HepG2 (cell line): ENCODE measurements at regions of chr11 and their contacts with region 1.

Region 1: GRCh38 chr11:124934862-124935547 is 842 bp downstream of the HEPACAM start:
- DNase-seq: peak; percentile 78
- ATAC-seq: peak; percentile 63
- H3K4me3 ChIP-seq: peak overlapping the region; percentile 69 to 84 (median 83)
- H3K27ac ChIP-seq: peak overlapping the region; percentile 90
- H3K4me1 ChIP-seq: peaks cover 87% of the 10 kb centered on the region
- H3K27me3 ChIP-seq: no peaks in the 10 kb centered on the region; a peak in 1 of 5 replicates
- CTCF ChIP-seq: peak; percentile 62
- EP300 ChIP-seq: peak in 1 of 2 experiments; percentile 64; a peak in 1 of 4 replicates
- POLR2A ChIP-seq: 0 out of 4 replicates have a peak, but pooled peaks of 1 of the 2 experiments have one; percentile 41
- RAD21 ChIP-seq: no peak

Region 2: GRCh38 chr11:124622531-124623451 is 312.2 kb before region 1 on chr11 and contains the start of gene TBRG1:
- CTCF ChIA-PET with region 1: no interaction called
- POLR2A ChIA-PET with region 1: interaction called, 4 read pairs
- in situ Hi-C with region 1: no loop called
- intact Hi-C with region 1: loop called (anchors 5 kb)
- DNase-seq: peak; percentile 92
- ATAC-seq: peak; percentile 99
- H3K4me3 ChIP-seq: peak within 1 kb of the TSS; percentile 88 to 98 (median 96)
- H3K27ac ChIP-seq: peak within 1 kb of the TSS; percentile 90
- H3K4me1 ChIP-seq: peaks cover 29% of the 10 kb centered on the region
- H3K27me3 ChIP-seq: peaks cover 0 to 15% of the 10 kb centered on the region in 2 experiments; a peak in 2 of 5 replicates
- CTCF ChIP-seq: 0 out of 2 replicates have a peak, but pooled peaks have one; percentile 16
- EP300 ChIP-seq: no peak
- POLR2A ChIP-seq: peak; percentile 95 to 97
- RAD21 ChIP-seq: peak; percentile 32; the same call in 1 of the 2 replicates
- total RNA-seq, gene TBRG1: 20.3 and 21.7 TPM in 2 replicates

Region 3: DNA sequence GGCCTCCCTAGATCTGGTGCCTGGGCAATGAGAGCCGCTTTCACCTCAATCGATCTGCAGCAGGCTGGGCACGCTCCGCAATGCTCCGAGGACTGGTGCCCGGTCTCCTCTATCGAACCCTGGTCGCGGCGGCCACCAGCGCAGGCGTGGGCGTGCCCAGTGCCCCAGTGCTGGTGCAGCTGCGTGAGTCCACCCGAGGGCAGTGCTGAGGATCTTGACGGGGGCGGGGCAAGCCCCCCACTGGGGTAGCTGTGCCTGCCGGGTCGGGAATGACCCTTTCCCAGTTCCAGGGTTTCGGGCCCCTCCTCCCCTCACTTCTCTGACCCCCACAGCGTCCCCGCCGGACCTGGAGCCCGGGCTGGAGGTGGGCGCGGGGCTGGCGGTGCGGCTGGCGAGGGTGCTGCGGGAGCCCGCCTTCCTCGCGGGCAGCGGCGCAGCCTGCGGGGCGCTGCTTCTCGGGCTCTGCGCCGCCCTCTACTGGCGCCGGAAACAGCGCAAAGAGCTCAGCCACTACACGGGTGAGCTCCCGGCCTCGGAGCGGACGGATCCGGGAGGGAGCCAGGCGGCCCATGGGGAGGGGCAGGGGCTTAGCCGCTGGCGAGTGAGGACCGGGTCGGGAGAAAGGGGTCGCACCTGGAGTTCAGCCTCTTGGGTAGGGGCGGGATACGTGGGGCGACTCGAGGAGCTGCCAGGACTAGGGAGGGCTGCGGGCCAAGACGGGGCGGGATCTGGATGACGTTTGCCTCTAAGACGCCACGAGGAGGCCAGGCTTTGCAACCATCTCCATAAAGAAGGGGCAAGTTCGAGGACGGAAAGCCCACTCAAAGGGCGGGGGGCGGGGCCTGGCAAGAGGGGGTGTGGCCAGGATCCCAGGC is 58.8 kb before region 1 on chr11:
- CTCF ChIA-PET with region 1: no interaction called
- POLR2A ChIA-PET with region 1: interaction called, 7 read pairs
- in situ Hi-C with region 1: no loop called
- intact Hi-C with region 1: loop called (anchors 2 kb)
- DNase-seq: peak; percentile 54
- ATAC-seq: peak; percentile 93
- H3K4me3 ChIP-seq: peak overlapping the region; percentile 51 to 78 (median 64)
- H3K27ac ChIP-seq: no peak overlapping the region
- H3K4me1 ChIP-seq: peaks cover 47% of the 10 kb centered on the region
- H3K27me3 ChIP-seq: peaks cover 2 to 63% of the 10 kb centered on the region in 2 experiments; a peak in 4 of 5 replicates
- CTCF ChIP-seq: peak; percentile 90
- EP300 ChIP-seq: no peak
- POLR2A ChIP-seq: 0 out of 4 replicates have a peak, but pooled peaks of 1 of the 2 experiments have one; percentile 28
- RAD21 ChIP-seq: peak; percentile 54; the same call in 1 of the 2 replicates

Region 4: DNA sequence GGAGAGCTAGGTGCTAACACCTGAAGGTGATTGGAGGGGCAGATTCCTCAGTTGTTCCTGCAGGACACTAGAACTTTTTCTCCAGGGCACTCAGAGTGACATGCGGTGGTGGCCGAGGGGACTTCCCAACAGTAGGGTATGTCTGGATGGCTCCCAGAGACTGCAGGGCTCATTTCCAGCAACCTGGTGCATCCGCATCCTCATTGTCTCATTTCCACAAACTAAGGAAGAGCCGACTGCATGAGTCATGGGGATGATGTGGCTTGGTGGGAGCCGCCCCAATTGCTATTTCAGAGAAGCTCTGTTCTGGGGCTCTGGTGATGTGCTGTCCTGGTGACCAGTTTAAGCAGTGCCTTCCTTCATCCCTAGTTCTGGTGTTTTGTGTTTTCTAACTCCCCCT is 34.5 kb before region 1 on chr11:
- CTCF ChIA-PET with region 1: no interaction called
- POLR2A ChIA-PET with region 1: interaction called, 9 read pairs
- in situ Hi-C with region 1: no loop called
- intact Hi-C with region 1: loop called (anchors 5 kb)
- DNase-seq: peak; percentile 25
- ATAC-seq: no peak; the same call in 2 of the 3 replicates
- H3K4me3 ChIP-seq: no peak overlapping the region
- H3K27ac ChIP-seq: no peak overlapping the region
- H3K4me1 ChIP-seq: peaks cover 54% of the 10 kb centered on the region
- H3K27me3 ChIP-seq: peaks cover 0 to 26% of the 10 kb centered on the region in 2 experiments; a peak in 1 of 5 replicates
- CTCF ChIP-seq: no peak
- EP300 ChIP-seq: no peak
- POLR2A ChIP-seq: no peak
- RAD21 ChIP-seq: no peak

Region 5: GRCh38 chr11:125649465-125650166 is 714.6 kb after region 1 on chr11:
- CTCF ChIA-PET with region 1: no interaction called
- POLR2A ChIA-PET with region 1: no interaction called
- in situ Hi-C with region 1: no loop called
- intact Hi-C with region 1: no loop called
- DNase-seq: no peak
- ATAC-seq: no peak
- H3K4me3 ChIP-seq: no peak overlapping the region
- H3K27ac ChIP-seq: no peak overlapping the region
- H3K4me1 ChIP-seq: no peaks in the 10 kb centered on the region
- H3K27me3 ChIP-seq: no peaks in the 10 kb centered on the region
- CTCF ChIP-seq: no peak
- EP300 ChIP-seq: no peak
- POLR2A ChIP-seq: no peak
- RAD21 ChIP-seq: no peak